T-cell (primary cell): ENCODE measurements at regions of chr14 and their contacts with region 1.

Region 1: DNA sequence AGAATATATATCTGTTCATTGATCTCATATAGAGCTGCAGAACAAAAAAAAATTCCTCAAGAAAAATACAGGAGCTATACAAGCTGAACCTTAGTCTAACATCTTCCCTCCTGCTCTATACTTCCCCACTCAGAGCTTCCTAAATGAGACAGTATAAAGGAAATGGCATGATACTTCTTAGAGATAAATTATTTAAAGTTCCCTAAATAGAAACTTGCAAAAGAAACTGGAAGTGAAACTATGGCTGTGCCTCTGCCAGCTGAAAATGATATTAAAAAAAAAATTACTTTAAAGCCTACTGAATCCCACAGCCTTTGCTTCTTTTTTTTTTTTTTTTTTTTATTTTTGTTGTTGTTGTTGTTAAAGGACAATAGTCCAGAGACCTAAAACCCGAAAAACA is 11.6 kb upstream of the NEK9 start:
- DNase-seq: no peak
- ATAC-seq: peak in 1 of 4 experiments; percentile 54
- H3K4me3 ChIP-seq: no peak overlapping the region
- H3K4me3 Mint-ChIP-seq: no peak overlapping the region
- H3K27ac ChIP-seq: peak overlapping the region; percentile 9
- H3K27ac Mint-ChIP-seq: peak overlapping the region; percentile 80 to 83
- H3K4me1 ChIP-seq: peaks cover 9 to 22% of the 10 kb centered on the region in 2 experiments
- H3K4me1 Mint-ChIP-seq: peaks cover 42 to 52% (median 45%) of the 10 kb centered on the region in 3 donors
- H3K27me3 ChIP-seq: no peaks in the 10 kb centered on the region
- H3K27me3 Mint-ChIP-seq: no peaks in the 10 kb centered on the region

Region 2: GRCh38 chr14:75113932-75114539 is 24.5 kb before region 1 on chr14:
- CTCF ChIA-PET with region 1: no interaction called
- POLR2A ChIA-PET with region 1: no interaction called
- DNase-seq: no peak
- ATAC-seq: peak in 3 of 4 experiments; percentile 34 to 50 (median 45)
- H3K4me3 ChIP-seq: no peak overlapping the region
- H3K4me3 Mint-ChIP-seq: no peak overlapping the region
- H3K27ac ChIP-seq: no peak overlapping the region
- H3K27ac Mint-ChIP-seq: no peak overlapping the region
- H3K4me1 ChIP-seq: no peaks in the 10 kb centered on the region
- H3K4me1 Mint-ChIP-seq: peaks cover 11 to 16% (median 13%) of the 10 kb centered on the region in 3 donors
- H3K27me3 ChIP-seq: no peaks in the 10 kb centered on the region
- H3K27me3 Mint-ChIP-seq: no peaks in the 10 kb centered on the region

Region 3: GRCh38 chr14:77076874-77077439 is 1938.5 kb after region 1 on chr14:
- CTCF ChIA-PET with region 1: no interaction called
- POLR2A ChIA-PET with region 1: interaction called in 1 of 2 experiments, 13 read pairs
- DNase-seq: no peak
- ATAC-seq: no peak
- H3K4me3 ChIP-seq: no peak overlapping the region
- H3K4me3 Mint-ChIP-seq: no peak overlapping the region
- H3K27ac ChIP-seq: no peak overlapping the region
- H3K27ac Mint-ChIP-seq: no peak overlapping the region
- H3K4me1 ChIP-seq: no peaks in the 10 kb centered on the region
- H3K4me1 Mint-ChIP-seq: no peaks in the 10 kb centered on the region
- H3K27me3 ChIP-seq: no peaks in the 10 kb centered on the region
- H3K27me3 Mint-ChIP-seq: peaks cover 0 to 2% of the 10 kb centered on the region in 2 donors